ENCODE measurements at regions of chr1 and their contacts with region 1.

Region 1: GRCh38 chr1:41862384-41863174 is 56.1 kb downstream of the HIVEP3 start:
- DNase-seq: peak; percentile 43
- H3K4me3 Mint-ChIP-seq: no peak overlapping the region
- H3K27ac Mint-ChIP-seq: peak overlapping the region; percentile 87
- H3K4me1 Mint-ChIP-seq: peaks cover 36% of the 10 kb centered on the region
- H3K27me3 Mint-ChIP-seq: no peaks in the 10 kb centered on the region

Region 2: DNA sequence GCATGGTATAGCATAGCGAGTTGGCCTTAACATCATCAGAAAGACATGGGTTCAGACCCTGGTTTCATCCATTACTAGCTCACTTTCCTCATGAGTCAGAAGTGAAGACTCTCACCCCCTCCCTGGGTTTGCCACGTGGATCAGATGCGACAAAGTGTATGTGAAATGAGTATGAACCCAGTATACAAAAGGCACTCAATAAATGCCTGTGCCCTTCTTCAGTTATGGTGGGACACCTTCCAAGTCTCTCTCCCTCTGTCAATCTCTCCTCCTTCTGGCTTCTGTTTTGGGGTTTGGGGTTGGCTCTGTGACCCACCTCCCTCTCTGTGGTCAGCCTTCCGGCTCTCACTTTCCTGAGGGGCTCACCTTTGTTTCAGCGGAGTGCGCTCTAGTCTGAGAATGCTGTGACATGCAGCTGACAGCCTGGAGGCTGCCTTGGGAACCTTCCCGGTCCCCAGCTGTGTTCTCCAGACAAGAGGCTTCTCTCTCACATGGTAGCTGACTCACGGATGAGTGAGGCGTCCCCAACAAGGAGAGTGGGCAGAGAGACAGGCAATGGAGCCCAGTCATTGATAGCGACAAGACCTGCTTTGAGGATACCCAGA is 223.1 kb before region 1 on chr1:
- intact Hi-C with region 1: loop called (anchors 1 kb)
- DNase-seq: no peak
- H3K4me3 Mint-ChIP-seq: peak overlapping the region; percentile 60
- H3K27ac Mint-ChIP-seq: no peak overlapping the region
- H3K4me1 Mint-ChIP-seq: peaks cover 46% of the 10 kb centered on the region
- H3K27me3 Mint-ChIP-seq: no peaks in the 10 kb centered on the region

Region 3: GRCh38 chr1:41728403-41729202 is 134.0 kb before region 1 on chr1:
- intact Hi-C with region 1: loop called (anchors 2 kb)
- DNase-seq: peak; percentile 20
- H3K4me3 Mint-ChIP-seq: no peak overlapping the region
- H3K27ac Mint-ChIP-seq: peak overlapping the region; percentile 67
- H3K4me1 Mint-ChIP-seq: peaks cover 43% of the 10 kb centered on the region
- H3K27me3 Mint-ChIP-seq: no peaks in the 10 kb centered on the region

Region 4: GRCh38 chr1:41812051-41812450 is 50.5 kb before region 1 on chr1:
- intact Hi-C with region 1: loop called (anchors 1 kb)
- DNase-seq: peak; percentile 49
- H3K4me3 Mint-ChIP-seq: no peak overlapping the region
- H3K27ac Mint-ChIP-seq: no peak overlapping the region
- H3K4me1 Mint-ChIP-seq: peaks cover 49% of the 10 kb centered on the region
- H3K27me3 Mint-ChIP-seq: no peaks in the 10 kb centered on the region

Region 5: GRCh38 chr1:41827991-41828570 is 34.5 kb before region 1 on chr1:
- intact Hi-C with region 1: no loop called
- DNase-seq: no peak
- H3K4me3 Mint-ChIP-seq: no peak overlapping the region
- H3K27ac Mint-ChIP-seq: no peak overlapping the region
- H3K4me1 Mint-ChIP-seq: no peaks in the 10 kb centered on the region
- H3K27me3 Mint-ChIP-seq: peaks cover 5% of the 10 kb centered on the region

Region 6: DNA sequence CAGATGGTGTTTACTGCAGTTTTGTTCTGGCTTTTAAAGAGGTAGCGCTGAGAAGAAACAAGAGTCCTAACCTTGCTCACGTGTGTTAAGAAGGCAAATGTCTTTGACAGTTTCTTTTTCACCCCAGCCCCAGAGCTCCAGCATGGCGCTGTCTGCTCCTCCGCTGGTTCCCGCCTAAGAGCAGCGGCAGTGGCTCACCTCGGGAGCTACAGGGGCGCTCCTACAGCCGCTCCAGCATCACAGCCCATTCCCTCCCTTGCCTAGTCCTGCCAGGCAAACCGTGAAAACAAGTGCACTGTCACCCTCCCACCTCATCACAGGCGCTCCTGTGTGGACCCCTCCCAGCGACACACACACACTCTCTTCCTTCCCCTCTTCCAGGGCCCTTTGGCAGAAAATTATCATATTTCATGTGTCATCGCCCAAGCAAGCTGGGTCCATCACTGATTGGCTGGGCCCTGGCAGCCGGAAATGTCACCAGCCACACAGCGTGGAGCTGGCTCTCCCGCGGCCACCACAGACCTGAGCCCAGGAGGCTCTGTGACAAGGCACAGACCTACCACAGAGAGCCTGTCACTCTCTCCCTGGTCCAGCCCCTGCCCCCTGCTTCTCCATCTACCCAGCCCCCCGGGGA is 57.3 kb after region 1 on chr1:
- intact Hi-C with region 1: loop called (anchors 2 kb)
- DNase-seq: peak; percentile 85
- H3K4me3 Mint-ChIP-seq: peak overlapping the region; percentile 87
- H3K27ac Mint-ChIP-seq: peak overlapping the region; percentile 83
- H3K4me1 Mint-ChIP-seq: peaks cover 53% of the 10 kb centered on the region
- H3K27me3 Mint-ChIP-seq: peaks cover 15% of the 10 kb centered on the region

Measured in activated T-helper 2 cell treated with anti-CD3 and anti-CD28 coated beads, Interferon-gamma antibody, Interleukin-2, Interleukin-4, amounts not matched to agents 10 μg/mL and 5 μg/mL and 100 μg/mL, durations not matched to agents 14 hours and 24 hours and 36 hours (primary cell).